Activated B cell treated with CpG ODN at 0.5 μM for 24 hours (primary cell): ENCODE measurements at regions of chr6 and their contacts with region 1.

Region 1: GRCh38 chr6:8888468-8888867 is 453.1 kb upstream of the SLC35B3 start:
- DNase-seq: no peak
- ATAC-seq: no peak
- H3K4me3 Mint-ChIP-seq: no peak overlapping the region
- H3K27ac Mint-ChIP-seq: no peak overlapping the region
- H3K4me1 Mint-ChIP-seq: no peaks in the 10 kb centered on the region
- H3K27me3 Mint-ChIP-seq: no peaks in the 10 kb centered on the region
- CTCF ChIP-seq: no peak

Region 2: DNA sequence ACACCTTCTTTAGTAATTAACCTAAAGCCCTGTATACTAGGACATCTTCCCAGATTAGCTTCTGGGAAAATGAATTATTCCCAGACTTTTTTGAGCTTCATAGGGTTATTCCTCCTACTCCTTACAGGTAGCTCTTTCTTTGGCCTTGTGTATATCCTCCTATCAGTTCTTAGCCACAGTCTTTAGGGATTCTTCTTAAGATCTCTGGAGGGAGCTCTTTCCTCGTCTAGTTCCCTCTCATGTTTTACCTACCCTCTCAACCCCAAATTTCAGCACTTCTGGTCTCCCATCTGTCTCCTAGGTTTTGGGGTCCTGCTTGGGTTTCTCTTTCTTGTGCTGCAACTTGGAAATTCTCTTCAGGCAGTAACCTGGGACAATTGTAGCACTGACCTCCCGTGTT is 406.8 kb before region 1 on chr6:
- CTCF ChIA-PET with region 1: no interaction called
- POLR2A ChIA-PET with region 1: no interaction called
- intact Hi-C with region 1: loop called (anchors 2 kb)
- DNase-seq: no peak
- ATAC-seq: no peak
- H3K4me3 Mint-ChIP-seq: no peak overlapping the region
- H3K27ac Mint-ChIP-seq: no peak overlapping the region
- H3K4me1 Mint-ChIP-seq: no peaks in the 10 kb centered on the region
- H3K27me3 Mint-ChIP-seq: peaks cover 12% of the 10 kb centered on the region
- CTCF ChIP-seq: no peak

Region 3: DNA sequence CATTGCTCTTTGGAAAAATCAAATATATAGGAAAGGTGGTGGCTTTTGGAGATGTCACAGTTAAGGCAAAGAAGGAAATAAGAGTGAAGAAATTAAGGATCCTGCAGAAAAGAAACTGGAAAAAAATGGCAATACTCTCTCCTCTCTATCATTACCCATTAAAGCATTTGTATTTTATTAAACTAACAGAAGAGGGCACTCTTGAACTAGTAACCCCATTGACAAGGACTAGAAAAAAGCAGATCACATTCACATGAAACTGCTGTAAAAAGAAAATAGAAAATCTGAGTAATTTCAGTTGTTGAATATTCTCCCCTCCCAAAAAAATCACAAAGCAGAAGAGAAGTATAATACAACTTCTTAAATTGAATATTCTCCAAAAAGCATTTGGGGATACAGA is 349.0 kb before region 1 on chr6:
- CTCF ChIA-PET with region 1: no interaction called
- POLR2A ChIA-PET with region 1: no interaction called
- intact Hi-C with region 1: loop called (anchors 2 kb)
- DNase-seq: no peak
- ATAC-seq: no peak
- H3K4me3 Mint-ChIP-seq: no peak overlapping the region
- H3K27ac Mint-ChIP-seq: no peak overlapping the region
- H3K4me1 Mint-ChIP-seq: no peaks in the 10 kb centered on the region
- H3K27me3 Mint-ChIP-seq: no peaks in the 10 kb centered on the region
- CTCF ChIP-seq: no peak

Region 4: DNA sequence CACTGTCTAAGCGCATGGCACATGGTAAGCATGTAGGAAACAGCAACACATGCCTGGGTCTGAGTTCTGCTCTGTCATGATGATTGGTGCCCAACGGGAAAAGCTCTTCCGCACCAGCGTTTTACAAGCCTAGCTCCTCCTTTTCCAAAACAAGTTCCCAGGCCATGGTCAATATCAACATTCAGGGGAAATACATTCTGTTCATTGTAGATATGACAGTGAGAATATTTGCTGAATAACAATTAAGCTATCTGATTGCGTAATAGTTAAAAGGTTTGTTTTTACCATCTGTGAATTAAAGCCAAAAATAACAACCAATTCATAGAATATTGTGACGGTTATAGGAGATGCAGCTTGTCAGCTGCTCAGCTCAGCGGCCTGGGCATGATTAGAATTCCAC is 48.8 kb before region 1 on chr6:
- CTCF ChIA-PET with region 1: no interaction called
- POLR2A ChIA-PET with region 1: no interaction called
- intact Hi-C with region 1: no loop called
- DNase-seq: no peak
- ATAC-seq: no peak
- H3K4me3 Mint-ChIP-seq: no peak overlapping the region
- H3K27ac Mint-ChIP-seq: no peak overlapping the region
- H3K4me1 Mint-ChIP-seq: no peaks in the 10 kb centered on the region
- H3K27me3 Mint-ChIP-seq: no peaks in the 10 kb centered on the region
- CTCF ChIP-seq: no peak